HCT116 (cell line): ENCODE measurements at regions of chr16 and their contacts with region 1.

Region 1: GRCh38 chr16:85347213-85347591 is 234.9 kb upstream of the CIBAR2 start:
- DNase-seq: no peak
- ATAC-seq: peak; percentile 66
- H3K4me3 ChIP-seq: no peak overlapping the region
- H3K27ac ChIP-seq: no peak overlapping the region
- H3K4me1 ChIP-seq: peaks cover 18 to 21% of the 10 kb centered on the region in 2 experiments
- H3K27me3 ChIP-seq: no peaks in the 10 kb centered on the region
- CTCF ChIP-seq: peak in 2 of 3 experiments; percentile 77 to 85; a peak in 5 of 6 replicates
- POLR2A ChIP-seq: no peak
- RAD21 ChIP-seq: peak; percentile 84

Region 2: GRCh38 chr16:85330694-85331188 is 16.5 kb before region 1 on chr16:
- CTCF ChIA-PET with region 1: interaction called, 14 read pairs
- POLR2A ChIA-PET with region 1: no interaction called
- RAD21 ChIA-PET with region 1: interaction called in 1 of 2 experiments, 5 read pairs
- intact Hi-C with region 1: no loop called
- DNase-seq: peak; percentile 86
- ATAC-seq: peak; percentile 70
- H3K4me3 ChIP-seq: no peak overlapping the region
- H3K27ac ChIP-seq: peak overlapping the region; percentile 50
- H3K4me1 ChIP-seq: peaks cover 67 to 74% of the 10 kb centered on the region in 2 experiments
- H3K27me3 ChIP-seq: no peaks in the 10 kb centered on the region
- CTCF ChIP-seq: peak in 2 of 3 experiments; percentile 62 to 75; a peak in 4 of 6 replicates
- POLR2A ChIP-seq: no peak
- RAD21 ChIP-seq: no peak